ENCODE measurements at regions of chr7 and their contacts with region 1.

Region 1: DNA sequence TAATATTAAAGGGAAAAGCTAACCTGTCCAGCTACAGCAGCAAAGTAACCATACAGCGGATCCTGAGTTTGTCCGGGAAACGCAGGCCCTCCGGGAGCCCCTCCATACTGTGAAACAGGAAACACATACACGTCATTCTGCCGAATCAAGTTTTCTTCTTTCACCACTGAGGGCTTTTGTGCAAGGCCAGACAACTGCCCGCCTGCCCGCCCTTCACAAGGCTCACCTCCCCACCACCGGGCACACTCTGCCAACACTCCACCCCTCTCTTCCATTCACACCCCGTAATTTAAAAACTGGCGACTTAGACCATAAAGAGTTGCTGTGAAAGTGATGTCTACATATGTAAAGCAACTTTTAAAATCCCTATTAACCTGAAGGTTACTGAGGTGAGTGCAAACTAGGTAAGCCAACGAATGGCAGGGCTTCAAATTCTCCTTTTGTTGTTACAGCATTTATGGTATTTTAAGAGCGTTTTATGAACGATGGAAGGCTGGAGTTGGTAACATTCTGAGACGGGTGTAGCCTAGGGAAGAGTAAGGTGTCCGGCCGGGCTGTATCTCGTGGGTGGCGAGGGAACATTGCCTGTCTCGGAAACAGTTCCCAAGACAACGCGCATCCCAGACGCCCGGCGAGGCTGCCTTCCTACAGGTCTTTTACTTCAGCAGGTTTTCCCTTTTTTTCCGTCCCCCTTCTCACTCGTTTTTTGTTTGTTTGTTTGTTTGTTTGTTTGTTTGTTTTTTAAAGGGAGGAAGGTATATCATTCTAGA is 817 bp downstream of the SRI start:
- DNase-seq: peak; percentile 45
- H3K4me3 Mint-ChIP-seq: peak overlapping the region; percentile 83
- H3K27ac Mint-ChIP-seq: peak overlapping the region; percentile 94
- H3K4me1 Mint-ChIP-seq: peaks cover 42% of the 10 kb centered on the region
- H3K27me3 Mint-ChIP-seq: no peaks in the 10 kb centered on the region

Region 2: DNA sequence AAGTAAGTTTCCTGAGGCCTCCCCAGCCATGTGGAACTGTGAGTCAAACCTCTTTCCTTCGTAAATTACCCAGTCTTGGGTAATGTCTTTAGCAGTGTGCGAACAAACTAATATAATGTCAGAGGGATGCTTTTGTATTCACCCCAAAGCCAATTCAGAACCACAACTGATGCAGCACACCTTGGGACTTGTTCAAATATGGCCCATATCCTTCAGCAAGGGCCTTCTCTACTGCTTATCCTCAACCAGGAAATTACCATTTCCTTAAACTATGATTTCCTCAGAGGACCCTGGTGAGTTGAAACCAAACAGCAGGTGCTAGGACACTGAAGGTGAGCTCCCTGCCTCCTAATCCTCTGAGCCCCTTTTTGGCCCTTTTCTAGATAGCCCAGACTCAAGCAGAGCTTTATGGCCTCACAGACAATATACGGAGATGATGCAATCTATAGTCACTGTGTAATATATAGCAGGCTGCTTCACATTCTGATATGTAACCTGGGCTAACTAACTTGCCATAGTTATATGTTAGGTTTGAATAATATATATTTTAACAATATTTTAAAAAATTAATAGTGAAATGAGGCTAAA is 14.4 kb before region 1 on chr7:
- CTCF ChIA-PET with region 1: interaction called, 4 read pairs
- POLR2A ChIA-PET with region 1: interaction called, 10 read pairs
- DNase-seq: no peak
- H3K4me3 Mint-ChIP-seq: no peak overlapping the region
- H3K27ac Mint-ChIP-seq: peak overlapping the region; percentile 47
- H3K4me1 Mint-ChIP-seq: peaks cover 9% of the 10 kb centered on the region
- H3K27me3 Mint-ChIP-seq: no peaks in the 10 kb centered on the region

Region 3: DNA sequence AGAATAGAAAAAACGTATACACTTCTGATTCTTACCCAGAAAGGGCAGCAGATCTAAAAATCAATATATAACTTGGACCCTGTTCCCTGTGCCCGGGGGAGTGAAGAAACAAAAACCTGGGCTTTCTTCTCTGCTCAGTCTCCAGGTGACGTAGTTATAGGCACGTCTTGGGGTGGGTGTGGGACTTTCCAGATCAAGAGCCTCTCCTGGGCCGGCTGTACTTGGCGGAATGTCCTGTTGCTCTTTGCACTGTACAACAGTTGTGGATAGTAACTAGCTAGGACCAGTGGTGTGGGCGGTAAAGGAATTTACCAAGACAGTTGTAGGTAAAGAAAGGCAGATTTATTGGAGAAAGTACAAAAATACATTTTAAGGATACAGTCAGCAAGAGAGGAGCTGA is 128.1 kb after region 1 on chr7:
- CTCF ChIA-PET with region 1: no interaction called
- POLR2A ChIA-PET with region 1: no interaction called
- DNase-seq: no peak
- H3K4me3 Mint-ChIP-seq: no peak overlapping the region
- H3K27ac Mint-ChIP-seq: no peak overlapping the region
- H3K4me1 Mint-ChIP-seq: no peaks in the 10 kb centered on the region
- H3K27me3 Mint-ChIP-seq: peaks cover 17% of the 10 kb centered on the region